ENCODE measurements at regions of chr3 and their contacts with region 1.

Region 1: DNA sequence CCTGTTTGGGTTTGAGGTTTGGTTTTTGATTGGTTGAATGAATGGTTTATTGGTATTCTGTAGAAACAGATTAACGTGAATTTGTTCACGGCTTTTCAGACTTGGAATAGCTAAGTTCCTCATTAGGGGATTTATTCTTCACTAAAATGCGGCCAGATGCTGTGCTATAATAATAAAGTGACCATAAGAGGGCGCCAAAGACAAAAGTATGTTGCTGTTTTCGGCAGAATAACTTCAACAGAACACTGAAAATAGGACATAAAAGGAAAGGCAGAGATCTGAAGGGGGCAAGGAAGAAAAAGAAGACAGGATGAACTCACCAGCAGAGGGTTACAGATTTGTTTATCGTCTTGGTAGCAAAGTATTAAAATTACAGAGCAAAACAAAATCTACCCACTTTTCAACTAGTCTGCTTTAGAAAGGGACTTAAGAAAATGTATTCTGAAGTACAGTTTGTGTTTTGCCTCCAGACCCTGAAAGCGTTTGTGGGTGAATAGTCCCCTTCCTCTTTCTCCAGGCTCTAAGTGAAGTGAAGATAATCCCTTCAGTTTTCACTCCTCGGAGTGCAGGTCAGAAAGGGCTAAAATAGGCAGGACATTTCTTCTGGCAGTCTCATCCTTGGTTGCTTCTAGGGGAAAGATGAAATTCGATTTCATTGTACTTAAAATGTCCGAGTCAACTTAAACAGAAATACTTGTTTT is 147.6 kb downstream of the IL20RB start:
- DNase-seq: no peak

Region 2: GRCh38 chr3:137065381-137065780 is 40.0 kb before region 1 on chr3:
- intact Hi-C with region 1: no loop called
- DNase-seq: no peak

Region 3: DNA sequence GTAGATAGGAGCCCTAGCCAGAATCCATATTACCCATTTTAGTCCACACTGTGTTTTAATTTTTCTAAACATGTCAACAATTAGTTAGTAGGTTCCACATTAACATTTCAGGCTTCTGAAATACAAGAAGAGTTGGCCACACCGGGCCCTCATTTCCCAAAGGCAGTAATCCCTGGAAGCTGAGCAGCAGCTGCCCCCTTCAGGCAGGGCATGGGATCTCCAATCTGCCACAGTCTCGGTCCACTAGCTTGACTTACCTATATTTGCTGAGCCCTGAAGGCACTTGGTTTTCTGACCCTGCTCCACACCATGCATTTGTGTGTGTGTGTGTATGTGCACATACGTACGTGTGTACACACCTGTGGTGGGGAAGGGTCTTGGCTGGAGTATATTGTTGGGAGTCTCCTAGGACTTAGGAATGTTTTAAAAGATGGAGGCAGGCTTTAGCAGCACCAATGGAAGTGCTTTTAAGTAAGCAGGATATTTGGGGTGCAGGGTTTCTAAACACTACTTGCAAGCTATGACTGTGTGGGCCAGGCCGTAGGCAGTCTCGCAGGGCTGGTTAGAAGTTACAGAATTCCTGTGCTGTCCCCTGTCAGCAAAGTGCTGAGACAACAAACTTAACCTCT is 587.5 kb after region 1 on chr3:
- intact Hi-C with region 1: loop called (anchors 10 kb)
- DNase-seq: no peak

Region 4: DNA sequence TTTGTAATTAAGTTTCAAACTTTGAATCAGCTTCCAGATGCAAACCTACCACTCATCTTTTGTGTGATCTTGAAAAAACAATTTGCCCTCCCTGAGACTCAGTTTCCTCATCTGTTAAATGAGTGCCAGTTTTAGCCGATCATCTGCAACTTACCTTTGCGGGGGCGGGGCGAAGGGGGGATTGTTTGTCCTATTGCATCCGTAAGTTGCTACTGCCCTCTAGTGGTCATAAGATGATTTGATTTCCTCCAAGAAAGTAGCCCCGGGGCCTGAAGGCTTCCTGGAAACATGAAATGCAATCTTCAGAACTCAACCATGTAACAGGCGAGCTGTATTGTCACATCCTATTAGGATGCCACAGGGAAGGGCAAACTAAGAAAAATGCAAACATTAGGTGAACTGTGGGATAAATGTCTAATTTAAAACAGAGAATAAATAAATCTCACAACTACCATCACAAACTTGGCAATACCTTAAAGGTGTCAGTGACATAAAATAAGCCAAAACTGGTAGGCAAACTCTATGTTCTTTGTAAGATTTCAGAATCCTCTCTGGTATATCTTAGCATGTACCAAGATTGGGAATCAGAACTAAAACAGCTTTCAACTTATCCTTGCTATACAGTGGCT is 841.0 kb after region 1 on chr3:
- intact Hi-C with region 1: loop called (anchors 5 kb)
- DNase-seq: no peak

Region 5: GRCh38 chr3:138051946-138052802 is 946.7 kb after region 1 on chr3:
- intact Hi-C with region 1: loop called (anchors 10 kb)
- DNase-seq: no peak

Region 6: GRCh38 chr3:138118612-138119422 is 1013.4 kb after region 1 on chr3:
- intact Hi-C with region 1: loop called (anchors 10 kb)
- DNase-seq: peak; percentile 84